HEK293 (cell line): ENCODE measurements at regions of chr15 and their contacts with region 1.

Region 1: GRCh38 chr15:65610871-65611718 is at the start of gene INTS14:
- H3K4me3 ChIP-seq: peak within 1 kb of the TSS; percentile 91
- H3K27ac ChIP-seq: peak within 1 kb of the TSS; percentile 80
- H3K4me1 ChIP-seq: peaks cover 7% of the 10 kb centered on the region; the same call in 1 of the 2 replicates
- CTCF ChIP-seq: peak; percentile 100

Region 2: GRCh38 chr15:65516997-65517865 is 93.9 kb before region 1 on chr15 and contains the start of gene DPP8:
- CTCF ChIA-PET with region 1: interaction called, 3 read pairs
- POLR2A ChIA-PET with region 1: interaction called, 10 read pairs
- H3K4me3 ChIP-seq: peak within 1 kb of the TSS; percentile 99
- H3K27ac ChIP-seq: peak within 1 kb of the TSS; percentile 90
- H3K4me1 ChIP-seq: peaks cover 18% of the 10 kb centered on the region
- CTCF ChIP-seq: peak; percentile 100

Region 3: DNA sequence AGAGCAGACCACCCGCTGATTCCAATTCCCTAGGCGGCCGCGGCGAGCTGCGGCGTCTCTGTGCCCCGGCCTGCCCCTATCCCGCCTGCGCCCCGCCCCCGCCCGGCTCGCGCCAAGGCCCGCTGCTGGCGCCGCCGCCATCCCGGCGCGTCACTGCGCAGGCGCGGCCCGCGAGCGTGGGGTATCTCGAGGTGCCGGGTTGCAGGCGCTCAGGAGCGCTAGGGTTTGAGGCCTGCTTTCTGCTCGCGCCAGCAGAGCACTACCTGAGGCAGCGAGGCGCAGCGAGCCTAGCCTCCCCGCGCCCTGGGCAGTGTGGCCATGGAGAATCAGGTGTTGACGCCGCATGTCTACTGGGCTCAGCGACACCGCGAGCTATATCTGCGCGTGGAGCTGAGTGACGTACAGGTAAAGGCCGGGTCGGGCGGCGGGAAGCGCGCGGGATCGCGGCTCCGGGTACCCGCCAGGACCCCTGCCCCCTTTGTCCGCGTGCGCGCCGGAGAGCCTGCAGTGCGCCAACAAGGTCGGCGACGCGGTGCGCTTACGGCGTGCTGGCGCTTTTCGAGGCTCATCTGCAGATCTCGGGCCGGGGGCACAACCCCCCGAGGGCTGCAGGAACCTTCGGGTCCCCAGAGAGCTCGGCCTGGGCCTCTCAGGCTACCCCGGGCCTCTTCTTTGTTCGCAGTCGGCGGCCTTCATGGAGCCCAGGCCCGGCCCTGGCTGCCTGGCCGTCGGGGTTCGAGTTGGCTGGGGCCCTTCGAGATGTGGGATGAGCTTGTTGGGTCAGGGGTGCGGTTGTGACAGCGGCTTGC is 80.6 kb before region 1 on chr15 and contains the start of gene HACD3:
- CTCF ChIA-PET with region 1: no interaction called
- POLR2A ChIA-PET with region 1: interaction called, 12 read pairs
- H3K4me3 ChIP-seq: peak within 1 kb of the TSS; percentile 89
- H3K27ac ChIP-seq: peak within 1 kb of the TSS; percentile 99
- H3K4me1 ChIP-seq: peaks cover 30% of the 10 kb centered on the region
- CTCF ChIP-seq: peak; percentile 67

Region 4: DNA sequence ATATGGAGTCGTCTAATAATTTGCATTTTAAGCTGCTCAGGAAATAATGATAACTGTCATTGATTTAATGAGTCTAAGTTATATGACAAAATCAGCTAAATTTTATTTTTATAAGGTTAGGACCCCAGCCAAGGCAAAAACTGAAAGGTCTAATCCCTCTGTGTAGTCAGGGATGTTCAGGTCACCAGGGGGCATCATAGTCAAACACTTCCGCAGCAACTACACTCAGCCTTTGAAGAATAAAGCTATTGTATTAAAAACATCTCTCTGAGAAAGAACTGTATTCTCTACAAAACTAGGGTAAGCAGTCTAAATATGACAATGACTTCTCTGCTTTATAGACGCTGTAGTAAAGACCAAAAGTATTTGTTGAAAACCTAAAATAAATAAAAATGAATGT is 15.1 kb before region 1 on chr15:
- CTCF ChIA-PET with region 1: interaction called, 13 read pairs
- POLR2A ChIA-PET with region 1: interaction called, 12 read pairs
- H3K4me3 ChIP-seq: no peak overlapping the region
- H3K27ac ChIP-seq: no peak overlapping the region
- H3K4me1 ChIP-seq: no peaks in the 10 kb centered on the region
- CTCF ChIP-seq: peak; percentile 10; the same call in 1 of the 2 replicates

Region 5: DNA sequence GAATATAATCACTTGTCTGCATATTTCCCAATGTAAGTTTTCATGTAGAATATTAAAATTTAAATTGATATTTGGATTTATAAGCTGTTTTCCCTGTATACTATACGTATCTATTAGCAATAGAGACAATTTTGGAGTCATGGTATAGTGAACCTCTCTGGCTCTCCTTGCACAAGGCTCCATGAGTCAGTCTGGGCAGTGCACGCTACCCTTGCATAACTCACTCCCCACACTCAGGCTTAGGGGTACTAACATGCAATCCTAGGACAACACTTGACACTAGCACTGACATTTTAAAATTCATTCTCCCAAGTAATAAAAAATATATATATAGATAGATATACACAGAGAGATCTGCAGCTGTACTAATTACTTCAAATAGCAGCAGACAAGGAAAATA is 49.8 kb after region 1 on chr15:
- CTCF ChIA-PET with region 1: no interaction called
- POLR2A ChIA-PET with region 1: no interaction called
- H3K4me3 ChIP-seq: no peak overlapping the region
- H3K27ac ChIP-seq: no peak overlapping the region
- H3K4me1 ChIP-seq: no peaks in the 10 kb centered on the region
- CTCF ChIP-seq: no peak

Region 6: GRCh38 chr15:65832549-65833364 is 221.7 kb after region 1 on chr15:
- CTCF ChIA-PET with region 1: interaction called, 3 read pairs
- POLR2A ChIA-PET with region 1: interaction called, 13 read pairs
- H3K4me3 ChIP-seq: no peak overlapping the region
- H3K27ac ChIP-seq: peak overlapping the region; percentile 79
- H3K4me1 ChIP-seq: peaks cover 15% of the 10 kb centered on the region
- CTCF ChIP-seq: 0 out of 2 replicates have a peak, but pooled peaks have one; percentile 31

Region 7: DNA sequence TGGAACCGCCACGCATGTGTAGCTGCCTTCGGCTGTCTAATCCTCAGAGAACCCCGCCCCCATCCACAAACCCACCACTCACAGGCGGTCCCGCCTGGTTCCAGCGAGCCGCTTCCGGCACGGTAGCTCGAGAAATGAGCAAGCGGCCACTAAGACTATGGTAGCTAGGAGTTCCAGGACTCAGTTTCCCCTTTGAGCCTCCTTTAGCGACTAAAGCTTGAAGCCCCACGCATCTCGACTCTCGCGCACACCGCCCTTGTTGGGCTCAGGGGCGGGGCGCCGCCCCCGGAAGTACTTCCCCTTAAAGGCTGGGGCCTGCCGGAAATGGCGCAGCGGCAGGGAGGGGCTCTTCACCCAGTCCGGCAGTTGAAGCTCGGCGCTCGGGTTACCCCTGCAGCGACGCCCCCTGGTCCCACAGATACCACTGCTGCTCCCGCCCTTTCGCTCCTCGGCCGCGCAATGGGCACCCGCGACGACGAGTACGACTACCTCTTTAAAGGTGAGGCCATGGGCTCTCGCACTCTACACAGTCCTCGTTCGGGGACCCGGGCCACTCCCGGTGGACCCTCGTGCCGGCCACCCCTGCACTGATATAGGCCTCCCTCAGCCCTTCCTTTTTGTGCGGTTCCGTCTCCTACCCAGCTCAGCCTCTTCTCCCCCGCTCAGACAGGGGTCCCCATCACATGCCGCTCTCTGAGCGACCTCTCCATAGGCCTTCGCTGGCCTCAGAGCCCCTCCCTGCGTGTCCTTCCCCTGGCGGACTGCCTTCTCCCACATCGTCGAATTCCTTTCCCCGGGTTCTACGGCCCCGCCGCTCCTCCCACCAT is 258.2 kb after region 1 on chr15 and contains the start of gene RAB11A:
- CTCF ChIA-PET with region 1: interaction called, 6 read pairs
- POLR2A ChIA-PET with region 1: interaction called, 10 read pairs
- H3K4me3 ChIP-seq: peak within 1 kb of the TSS; percentile 94
- H3K27ac ChIP-seq: peak within 1 kb of the TSS; percentile 94
- H3K4me1 ChIP-seq: 0 out of 2 replicates have a peak, but pooled peaks cover 4% of the 10 kb centered on the region
- CTCF ChIP-seq: peak; percentile 97